ENCODE measurements at regions of chr21 and their contacts with region 1.

Region 1: DNA sequence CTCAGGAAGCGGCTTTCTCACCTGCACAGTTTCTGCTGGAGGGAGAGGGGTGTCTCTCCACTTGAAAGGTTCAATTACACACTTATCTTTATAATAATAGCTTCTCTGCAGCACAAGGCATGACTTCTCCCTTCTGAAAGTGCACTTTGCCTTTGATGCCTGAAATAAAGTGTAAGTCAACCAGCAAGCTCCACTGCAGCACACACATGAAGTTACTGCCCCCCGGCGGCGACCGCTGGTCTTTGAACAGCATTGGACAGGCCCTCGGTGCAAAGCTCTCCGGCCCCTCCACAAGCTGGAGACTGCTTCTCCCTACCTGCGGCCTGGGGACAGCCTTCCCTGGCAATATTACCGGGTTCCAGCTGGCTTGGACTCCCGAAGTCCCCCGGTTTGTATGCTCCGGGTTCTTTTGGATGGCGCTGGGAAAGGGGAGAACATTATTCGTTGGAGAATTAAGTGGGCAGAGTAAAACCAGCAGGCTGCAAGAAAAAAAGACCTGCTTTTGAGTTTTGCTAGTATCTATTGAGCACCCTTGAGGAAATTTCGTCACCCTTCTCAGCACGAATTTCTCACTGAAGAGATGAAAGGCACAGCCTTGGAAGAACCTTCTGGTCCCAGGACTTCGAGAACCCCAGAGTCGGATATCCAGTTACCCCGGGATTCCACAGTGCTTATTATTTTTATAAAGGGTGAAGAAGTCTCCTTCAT is 11.8 kb downstream of the RCAN1 start:
- DNase-seq: peak; percentile 79

Region 2: DNA sequence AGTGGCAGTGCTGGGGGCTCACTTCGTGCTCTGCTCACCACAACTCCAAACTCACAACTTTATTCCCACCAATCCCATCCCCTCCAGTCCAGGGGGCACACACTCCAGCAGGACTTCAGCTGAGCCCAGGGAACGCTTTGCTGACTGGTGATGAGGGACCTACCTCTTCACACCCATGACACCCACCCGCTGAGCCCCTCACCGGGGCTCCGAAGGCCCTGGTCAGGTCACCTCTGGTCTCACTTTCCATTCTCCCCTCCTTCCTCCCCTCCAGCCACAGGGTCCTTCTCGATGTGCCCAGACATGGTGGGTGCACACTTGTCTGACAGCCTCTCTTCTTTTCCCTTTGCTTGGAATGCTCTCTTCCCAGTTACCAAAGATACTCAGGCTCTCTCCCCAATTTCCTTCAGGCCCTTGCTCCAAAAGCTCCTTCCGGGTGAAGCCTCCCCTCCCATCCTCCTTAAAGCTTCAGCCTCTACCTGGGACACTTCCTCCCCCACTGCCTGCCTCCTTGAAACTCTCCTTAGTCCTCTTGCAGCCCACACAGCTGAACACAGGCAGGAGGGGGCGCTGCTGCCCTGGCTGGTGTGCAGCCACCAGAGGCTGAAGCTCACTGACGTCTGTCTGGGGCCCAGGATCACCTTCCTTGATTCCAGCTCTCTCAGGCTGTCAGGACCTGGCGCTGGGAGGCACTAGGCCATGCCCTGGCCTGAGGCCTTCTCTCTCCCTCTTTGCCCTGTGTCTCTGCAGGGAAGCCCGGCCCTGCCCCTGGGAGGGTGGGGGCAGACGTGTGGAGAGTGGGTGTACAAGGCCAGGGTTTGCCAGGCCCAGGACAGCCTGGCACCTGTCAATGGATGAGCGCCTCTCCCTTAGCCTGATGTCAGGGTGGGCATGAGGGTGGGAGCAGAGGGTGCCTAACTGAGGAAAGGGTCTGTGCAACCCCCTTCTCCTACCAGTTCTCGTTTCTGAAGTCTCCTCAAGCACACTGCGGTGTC is 92.7 kb before region 1 on chr21:
- CTCF ChIA-PET with region 1: interaction called, 29 read pairs
- POLR2A ChIA-PET with region 1: no interaction called
- DNase-seq: peak; percentile 70

Region 3: GRCh38 chr21:34565238-34565637 is 37.9 kb before region 1 on chr21:
- CTCF ChIA-PET with region 1: no interaction called
- POLR2A ChIA-PET with region 1: no interaction called
- DNase-seq: no peak

Region 4: GRCh38 chr21:34613679-34614632 is 10.8 kb after region 1 on chr21:
- CTCF ChIA-PET with region 1: interaction called, 25 read pairs
- POLR2A ChIA-PET with region 1: no interaction called
- DNase-seq: no peak